MCF 10A (cell line): ENCODE measurements at regions of chrX and their contacts with region 1.

Region 1: GRCh38 chrX:100512471-100512870 is 72.3 kb upstream of the TNMD start:
- DNase-seq: peak; percentile 38
- H3K4me3 Mint-ChIP-seq: no peak overlapping the region
- H3K27ac Mint-ChIP-seq: no peak overlapping the region
- H3K4me1 Mint-ChIP-seq: no peaks in the 10 kb centered on the region
- H3K27me3 Mint-ChIP-seq: peaks cover 49% of the 10 kb centered on the region
- CTCF ChIP-seq: peak; percentile 72

Region 2: GRCh38 chrX:100494646-100495370 is 17.7 kb before region 1 on chrX:
- CTCF ChIA-PET with region 1: interaction called, 14 read pairs
- POLR2A ChIA-PET with region 1: interaction called, 3 read pairs
- intact Hi-C with region 1: no loop called
- DNase-seq: no peak
- H3K4me3 Mint-ChIP-seq: no peak overlapping the region
- H3K27ac Mint-ChIP-seq: no peak overlapping the region
- H3K4me1 Mint-ChIP-seq: no peaks in the 10 kb centered on the region
- H3K27me3 Mint-ChIP-seq: peaks cover 27% of the 10 kb centered on the region
- CTCF ChIP-seq: no peak

Region 3: DNA sequence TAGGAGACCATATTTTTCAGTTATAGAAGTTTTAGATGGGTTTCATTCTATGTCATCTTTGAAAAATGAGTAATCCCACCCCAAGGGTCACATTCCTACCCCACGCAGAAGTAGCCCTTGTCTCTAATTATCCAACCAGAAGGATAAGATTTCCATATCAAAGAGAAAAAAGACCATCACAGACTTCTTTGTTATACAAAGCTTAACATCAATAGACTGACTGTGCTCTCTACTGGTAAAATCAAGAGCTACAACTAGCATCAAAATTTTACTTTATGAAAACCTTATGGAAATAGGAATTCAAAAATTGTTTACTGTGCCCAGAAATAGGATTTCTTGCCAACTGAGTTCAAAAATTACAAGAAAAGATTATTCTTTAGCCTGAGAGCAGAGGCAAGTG is 97.1 kb after region 1 on chrX:
- CTCF ChIA-PET with region 1: interaction called, 5 read pairs
- POLR2A ChIA-PET with region 1: no interaction called
- intact Hi-C with region 1: loop called (anchors 5 kb)
- DNase-seq: no peak
- H3K4me3 Mint-ChIP-seq: no peak overlapping the region
- H3K27ac Mint-ChIP-seq: no peak overlapping the region
- H3K4me1 Mint-ChIP-seq: no peaks in the 10 kb centered on the region
- H3K27me3 Mint-ChIP-seq: peaks cover 45% of the 10 kb centered on the region
- CTCF ChIP-seq: peak; percentile 20

Region 4: DNA sequence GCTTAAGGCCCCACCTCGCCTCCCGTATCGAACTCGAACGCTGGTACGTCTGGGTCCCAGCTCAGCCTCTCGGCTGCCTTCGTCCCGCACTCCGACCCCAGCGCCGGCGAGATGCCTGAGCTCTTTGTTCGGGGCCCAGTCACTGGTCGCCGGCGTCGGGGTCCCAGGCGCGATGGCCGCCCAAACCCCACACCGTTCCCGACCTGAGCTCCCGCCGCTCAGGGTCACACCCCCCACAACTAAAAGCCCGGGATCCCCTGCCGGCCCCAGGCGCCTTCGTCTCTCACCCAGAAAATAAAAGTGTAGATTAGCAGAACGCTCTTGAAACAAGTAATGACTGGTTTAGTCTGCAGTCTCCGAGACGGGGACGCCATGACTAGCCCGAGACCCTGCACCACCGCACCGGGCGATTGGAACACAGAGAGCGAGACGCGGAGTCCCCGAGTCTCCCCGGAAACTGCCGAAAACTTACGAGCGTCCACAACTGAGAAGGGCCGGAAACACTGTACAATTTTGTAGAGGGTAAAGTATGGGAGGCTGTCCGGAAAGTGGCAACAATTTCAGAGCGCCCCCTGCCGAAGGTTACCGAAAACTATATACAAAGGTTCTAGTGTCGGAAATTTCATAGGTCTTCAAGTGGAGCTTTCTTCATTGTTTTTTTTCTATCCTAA is 124.0 kb after region 1 on chrX and contains the start of gene TSPAN6:
- CTCF ChIA-PET with region 1: interaction called, 16 read pairs
- POLR2A ChIA-PET with region 1: interaction called, 3 read pairs
- intact Hi-C with region 1: loop called (anchors 2 kb)
- DNase-seq: peak; percentile 89
- H3K4me3 Mint-ChIP-seq: peak within 1 kb of the TSS; percentile 84
- H3K27ac Mint-ChIP-seq: peak within 1 kb of the TSS; percentile 86
- H3K4me1 Mint-ChIP-seq: no peaks in the 10 kb centered on the region
- H3K27me3 Mint-ChIP-seq: peaks cover 24% of the 10 kb centered on the region
- CTCF ChIP-seq: no peak
- total RNA-seq, gene TSPAN6: 4.9 and 5.6 TPM in 2 replicates

Region 5: GRCh38 chrX:100649550-100650356 is 137.3 kb after region 1 on chrX:
- CTCF ChIA-PET with region 1: no interaction called
- POLR2A ChIA-PET with region 1: no interaction called
- intact Hi-C with region 1: no loop called
- DNase-seq: peak; percentile 60
- H3K4me3 Mint-ChIP-seq: no peak overlapping the region
- H3K27ac Mint-ChIP-seq: no peak overlapping the region
- H3K4me1 Mint-ChIP-seq: peaks cover 4% of the 10 kb centered on the region
- H3K27me3 Mint-ChIP-seq: peaks cover 46% of the 10 kb centered on the region
- CTCF ChIP-seq: no peak

Region 6: DNA sequence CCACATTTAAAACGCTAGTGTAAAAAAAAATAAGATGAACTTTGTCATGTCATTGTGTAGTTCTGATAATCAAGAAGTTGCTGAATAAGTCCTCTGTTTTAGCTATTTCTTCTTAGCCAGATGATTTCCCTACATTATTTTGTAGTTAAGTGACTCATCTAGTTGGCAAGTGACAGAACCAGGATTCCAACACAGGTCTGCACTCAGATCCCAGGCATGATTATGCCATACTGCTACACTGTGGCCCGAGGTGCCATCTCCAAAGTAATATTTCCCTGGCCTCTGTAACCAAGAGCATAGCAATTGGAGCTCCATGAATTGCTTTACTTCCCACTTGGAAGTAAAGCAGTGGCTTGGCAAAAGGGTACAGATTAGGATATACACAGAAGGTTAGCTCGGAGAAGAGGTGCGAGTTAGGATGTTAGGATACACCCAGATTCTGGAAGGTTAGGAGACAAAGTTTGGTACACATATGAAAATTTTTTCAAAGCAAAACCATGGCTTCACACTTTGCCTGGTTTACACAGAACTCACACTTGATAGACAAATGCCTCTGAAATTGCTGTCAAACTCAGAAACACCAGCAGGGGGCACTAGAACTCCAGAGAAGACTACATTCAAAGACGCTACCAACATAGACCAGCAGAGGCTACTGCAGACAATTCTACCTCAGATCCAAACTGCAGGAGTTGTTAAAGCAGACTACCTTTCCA is 173.0 kb after region 1 on chrX:
- CTCF ChIA-PET with region 1: interaction called, 17 read pairs
- POLR2A ChIA-PET with region 1: no interaction called
- intact Hi-C with region 1: loop called (anchors 5 kb)
- DNase-seq: peak; percentile 80
- H3K4me3 Mint-ChIP-seq: no peak overlapping the region
- H3K27ac Mint-ChIP-seq: no peak overlapping the region
- H3K4me1 Mint-ChIP-seq: no peaks in the 10 kb centered on the region
- H3K27me3 Mint-ChIP-seq: peaks cover 32% of the 10 kb centered on the region
- CTCF ChIP-seq: peak; percentile 88

Region 7: GRCh38 chrX:100768679-100769338 is 256.3 kb after region 1 on chrX:
- CTCF ChIA-PET with region 1: interaction called, 19 read pairs
- POLR2A ChIA-PET with region 1: no interaction called
- intact Hi-C with region 1: loop called (anchors 1 kb)
- DNase-seq: peak; percentile 86
- H3K4me3 Mint-ChIP-seq: no peak overlapping the region
- H3K27ac Mint-ChIP-seq: no peak overlapping the region
- H3K4me1 Mint-ChIP-seq: no peaks in the 10 kb centered on the region
- H3K27me3 Mint-ChIP-seq: peaks cover 65% of the 10 kb centered on the region
- CTCF ChIP-seq: peak; percentile 100

Region 8: DNA sequence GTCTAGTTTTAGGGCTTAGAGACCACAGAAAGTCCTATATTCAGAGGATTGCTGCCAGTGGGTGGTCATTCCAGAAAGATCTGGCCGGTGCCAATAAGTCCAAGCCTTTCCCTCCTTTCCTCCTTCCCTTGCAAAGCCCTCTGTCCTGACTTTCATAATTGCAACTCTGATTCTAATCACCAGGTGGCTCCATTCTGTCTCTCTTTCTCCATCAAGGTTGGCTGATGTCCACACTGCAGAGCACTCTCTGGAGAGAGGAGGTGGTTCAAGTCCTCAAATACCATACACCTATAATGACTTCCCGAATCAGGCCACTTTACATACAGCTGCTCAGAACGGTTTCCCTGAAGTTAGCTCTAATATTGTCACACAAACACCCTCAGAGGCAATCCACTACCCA is 950.4 kb after region 1 on chrX:
- CTCF ChIA-PET with region 1: no interaction called
- POLR2A ChIA-PET with region 1: no interaction called
- intact Hi-C with region 1: no loop called
- DNase-seq: peak; percentile 51
- H3K4me3 Mint-ChIP-seq: no peak overlapping the region
- H3K27ac Mint-ChIP-seq: no peak overlapping the region
- H3K4me1 Mint-ChIP-seq: no peaks in the 10 kb centered on the region
- H3K27me3 Mint-ChIP-seq: peaks cover 63% of the 10 kb centered on the region
- CTCF ChIP-seq: peak; percentile 35